ENCODE measurements at regions of chr1 and their contacts with region 1.

Region 1: GRCh38 chr1:226846801-226847200 is 23.6 kb upstream of the PSEN2 start:
- DNase-seq: no peak
- ATAC-seq: no peak
- H3K4me3 ChIP-seq: no peak overlapping the region
- H3K4me3 Mint-ChIP-seq: no peak overlapping the region
- H3K27ac ChIP-seq: no peak overlapping the region
- H3K27ac Mint-ChIP-seq: no peak overlapping the region
- H3K4me1 ChIP-seq: no peaks in the 10 kb centered on the region
- H3K4me1 Mint-ChIP-seq: peaks cover 0 to 2% (median 2%) of the 10 kb centered on the region in 3 donors
- H3K27me3 ChIP-seq: no peaks in the 10 kb centered on the region
- H3K27me3 Mint-ChIP-seq: peaks cover 0 to 3% of the 10 kb centered on the region in 2 donors

Region 2: GRCh38 chr1:225347123-225347683 is 1499.6 kb before region 1 on chr1:
- CTCF ChIA-PET with region 1: no interaction called
- POLR2A ChIA-PET with region 1: interaction called in 1 of 2 experiments, 12 read pairs
- DNase-seq: no peak
- ATAC-seq: no peak
- H3K4me3 ChIP-seq: no peak overlapping the region
- H3K4me3 Mint-ChIP-seq: no peak overlapping the region
- H3K27ac ChIP-seq: no peak overlapping the region
- H3K27ac Mint-ChIP-seq: no peak overlapping the region
- H3K4me1 ChIP-seq: no peaks in the 10 kb centered on the region
- H3K4me1 Mint-ChIP-seq: no peaks in the 10 kb centered on the region
- H3K27me3 ChIP-seq: peaks cover 0 to 3% of the 10 kb centered on the region in 2 experiments
- H3K27me3 Mint-ChIP-seq: peaks cover 19 to 38% of the 10 kb centered on the region in 2 donors

Region 3: GRCh38 chr1:226626577-226626956 is 220.2 kb before region 1 on chr1:
- CTCF ChIA-PET with region 1: interaction called in 1 of 2 experiments, 11 read pairs
- POLR2A ChIA-PET with region 1: no interaction called
- DNase-seq: peak; percentile 48 to 86 (median 69)
- ATAC-seq: peak; percentile 83 to 95 (median 84)
- H3K4me3 ChIP-seq: peak overlapping the region; percentile 6 to 39
- H3K4me3 Mint-ChIP-seq: peak overlapping the region; percentile 29 to 65 (median 37)
- H3K27ac ChIP-seq: no peak overlapping the region
- H3K27ac Mint-ChIP-seq: peak overlapping the region; percentile 67 to 75
- H3K4me1 ChIP-seq: peaks cover 8 to 15% of the 10 kb centered on the region in 2 experiments
- H3K4me1 Mint-ChIP-seq: peaks cover 18 to 36% (median 26%) of the 10 kb centered on the region in 3 donors
- H3K27me3 ChIP-seq: peaks cover 0 to 15% of the 10 kb centered on the region in 2 experiments
- H3K27me3 Mint-ChIP-seq: peaks cover 0 to 2% of the 10 kb centered on the region in 2 donors

Measured in T-cell (primary cell).